H1 (cell line): ENCODE measurements at regions of chr17 and their contacts with region 1.

Region 1: GRCh38 chr17:28967221-28968140 is 16.2 kb upstream of the PHF12 start:
- DNase-seq: no peak
- H3K4me3 ChIP-seq: no peak overlapping the region
- H3K27ac ChIP-seq: no peak overlapping the region
- H3K4me1 ChIP-seq: peaks cover 11 to 22% (median 17%) of the 10 kb centered on the region in 4 experiments
- H3K27me3 ChIP-seq: no peaks in the 10 kb centered on the region; a peak in 1 of 7 replicates
- CTCF ChIP-seq: no peak
- EP300 ChIP-seq: no peak
- POLR2A ChIP-seq: no peak
- RAD21 ChIP-seq: no peak

Region 2: GRCh38 chr17:28896491-28896883 is 71.0 kb before region 1 on chr17:
- CTCF ChIA-PET with region 1: no interaction called
- POLR2A ChIA-PET with region 1: no interaction called
- DNase-seq: no peak
- H3K4me3 ChIP-seq: peak overlapping the region; percentile 79 to 94 (median 89)
- H3K27ac ChIP-seq: no peak overlapping the region
- H3K4me1 ChIP-seq: peaks cover 1 to 14% (median 5%) of the 10 kb centered on the region in 4 experiments
- H3K27me3 ChIP-seq: no peaks in the 10 kb centered on the region
- CTCF ChIP-seq: no peak
- EP300 ChIP-seq: no peak
- POLR2A ChIP-seq: no peak
- RAD21 ChIP-seq: no peak

Region 3: GRCh38 chr17:28982131-28982951 is 14.9 kb after region 1 on chr17:
- CTCF ChIA-PET with region 1: interaction called, 13 read pairs
- POLR2A ChIA-PET with region 1: interaction called, 20 read pairs
- DNase-seq: no peak
- H3K4me3 ChIP-seq: no peak overlapping the region
- H3K27ac ChIP-seq: no peak overlapping the region
- H3K4me1 ChIP-seq: peaks cover 14 to 18% (median 16%) of the 10 kb centered on the region in 4 experiments
- H3K27me3 ChIP-seq: no peaks in the 10 kb centered on the region
- CTCF ChIP-seq: no peak
- EP300 ChIP-seq: no peak
- POLR2A ChIP-seq: no peak
- RAD21 ChIP-seq: no peak

Region 4: DNA sequence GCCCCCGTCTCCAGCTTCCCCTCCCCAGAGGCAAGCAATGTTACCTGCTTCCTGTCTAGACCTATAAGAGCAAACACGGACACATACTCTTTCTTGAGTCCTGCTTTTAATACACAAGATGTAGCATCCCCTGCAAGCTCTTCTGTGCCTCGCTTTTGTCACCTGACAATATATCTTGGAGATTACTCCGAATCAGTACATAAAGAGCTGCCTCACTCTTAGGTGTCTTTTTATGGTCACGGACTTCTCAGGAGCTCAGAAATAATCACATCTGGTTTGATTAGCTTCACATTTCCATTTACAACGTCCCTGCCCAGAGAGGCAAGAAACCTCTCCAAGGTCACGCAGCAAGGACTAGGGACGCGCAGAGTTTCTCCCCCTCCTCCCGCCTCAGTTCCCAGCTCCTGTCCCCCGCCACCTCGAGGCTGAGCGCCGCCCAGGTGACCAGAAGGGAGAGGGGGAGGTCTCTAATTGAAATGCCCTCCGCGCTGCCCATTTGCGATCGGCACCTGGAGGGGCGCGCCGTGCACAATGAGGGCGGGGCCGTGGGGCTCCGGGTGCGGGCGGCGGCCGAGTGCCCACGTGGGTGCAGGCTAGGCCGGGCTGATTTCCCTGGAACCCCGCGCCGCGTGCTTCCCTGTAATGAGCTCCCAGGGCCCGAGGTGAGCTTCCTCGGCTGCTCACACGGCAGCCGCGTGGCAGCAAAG is 52.1 kb after region 1 on chr17:
- CTCF ChIA-PET with region 1: interaction called, 32 read pairs
- POLR2A ChIA-PET with region 1: interaction called, 8 read pairs
- DNase-seq: peak in 1 of 2 experiments; percentile 72
- H3K4me3 ChIP-seq: peak overlapping the region in 2 of 4 experiments; percentile 23 to 45; a peak in 4 of 8 replicates
- H3K27ac ChIP-seq: no peak overlapping the region
- H3K4me1 ChIP-seq: peaks cover 20 to 37% (median 32%) of the 10 kb centered on the region in 4 experiments
- H3K27me3 ChIP-seq: peaks cover 0 to 3% (median 0%) of the 10 kb centered on the region in 4 experiments; a peak in 3 of 7 replicates
- CTCF ChIP-seq: no peak
- EP300 ChIP-seq: no peak
- POLR2A ChIP-seq: no peak
- RAD21 ChIP-seq: no peak

Region 5: GRCh38 chr17:29042679-29043538 is 75.4 kb after region 1 on chr17 and contains the start of gene PIPOX:
- CTCF ChIA-PET with region 1: interaction called, 21 read pairs
- POLR2A ChIA-PET with region 1: interaction called, 17 read pairs
- DNase-seq: peak; percentile 81 to 94
- H3K4me3 ChIP-seq: peak within 1 kb of the TSS in 3 of 4 experiments; percentile 0 to 25 (median 15); a peak in 3 of 8 replicates
- H3K27ac ChIP-seq: peak within 1 kb of the TSS; percentile 92
- H3K4me1 ChIP-seq: peaks cover 14 to 27% (median 20%) of the 10 kb centered on the region in 4 experiments
- H3K27me3 ChIP-seq: no peaks in the 10 kb centered on the region
- CTCF ChIP-seq: peak; percentile 26 to 54 (median 45)
- EP300 ChIP-seq: peak in 1 of 2 experiments; percentile 85; a peak in 1 of 3 replicates
- POLR2A ChIP-seq: peak; percentile 60 to 89
- RAD21 ChIP-seq: peak in 1 of 2 experiments; percentile 63; a peak in 2 of 4 replicates
- total RNA-seq, gene PIPOX: 55.5 and 57.2 TPM in 2 replicates

Region 6: GRCh38 chr17:29061036-29061435 is 93.6 kb after region 1 on chr17:
- CTCF ChIA-PET with region 1: interaction called, 11 read pairs
- POLR2A ChIA-PET with region 1: interaction called, 5 read pairs
- DNase-seq: no peak
- H3K4me3 ChIP-seq: no peak overlapping the region
- H3K27ac ChIP-seq: no peak overlapping the region
- H3K4me1 ChIP-seq: peaks cover 9 to 26% (median 18%) of the 10 kb centered on the region in 4 experiments
- H3K27me3 ChIP-seq: 0 out of 7 replicates have a peak, but pooled peaks cover 0 to under 1% (median 0%) of the 10 kb centered on the region in 4 experiments
- CTCF ChIP-seq: no peak
- EP300 ChIP-seq: no peak
- POLR2A ChIP-seq: no peak
- RAD21 ChIP-seq: no peak

Region 7: GRCh38 chr17:29078183-29079045 is 110.9 kb after region 1 on chr17:
- CTCF ChIA-PET with region 1: interaction called, 30 read pairs
- POLR2A ChIA-PET with region 1: interaction called, 4 read pairs
- DNase-seq: no peak
- H3K4me3 ChIP-seq: no peak overlapping the region
- H3K27ac ChIP-seq: no peak overlapping the region
- H3K4me1 ChIP-seq: peaks cover 8 to 19% (median 16%) of the 10 kb centered on the region in 4 experiments
- H3K27me3 ChIP-seq: no peaks in the 10 kb centered on the region
- CTCF ChIP-seq: no peak
- EP300 ChIP-seq: no peak
- POLR2A ChIP-seq: no peak
- RAD21 ChIP-seq: no peak

Region 8: GRCh38 chr17:29111816-29112499 is 144.5 kb after region 1 on chr17:
- CTCF ChIA-PET with region 1: interaction called, 548 read pairs
- POLR2A ChIA-PET with region 1: interaction called, 13 read pairs
- DNase-seq: peak in 1 of 2 experiments; percentile 95
- H3K4me3 ChIP-seq: no peak overlapping the region
- H3K27ac ChIP-seq: no peak overlapping the region
- H3K4me1 ChIP-seq: peaks cover 0 to 18% (median 12%) of the 10 kb centered on the region in 4 experiments; a peak in 6 of 7 replicates
- H3K27me3 ChIP-seq: no peaks in the 10 kb centered on the region
- CTCF ChIP-seq: peak; percentile 94 to 99 (median 96)
- EP300 ChIP-seq: no peak
- POLR2A ChIP-seq: no peak
- RAD21 ChIP-seq: peak; percentile 84 to 89